ENCODE measurements at regions of chr2 and their contacts with region 1.

Region 1: DNA sequence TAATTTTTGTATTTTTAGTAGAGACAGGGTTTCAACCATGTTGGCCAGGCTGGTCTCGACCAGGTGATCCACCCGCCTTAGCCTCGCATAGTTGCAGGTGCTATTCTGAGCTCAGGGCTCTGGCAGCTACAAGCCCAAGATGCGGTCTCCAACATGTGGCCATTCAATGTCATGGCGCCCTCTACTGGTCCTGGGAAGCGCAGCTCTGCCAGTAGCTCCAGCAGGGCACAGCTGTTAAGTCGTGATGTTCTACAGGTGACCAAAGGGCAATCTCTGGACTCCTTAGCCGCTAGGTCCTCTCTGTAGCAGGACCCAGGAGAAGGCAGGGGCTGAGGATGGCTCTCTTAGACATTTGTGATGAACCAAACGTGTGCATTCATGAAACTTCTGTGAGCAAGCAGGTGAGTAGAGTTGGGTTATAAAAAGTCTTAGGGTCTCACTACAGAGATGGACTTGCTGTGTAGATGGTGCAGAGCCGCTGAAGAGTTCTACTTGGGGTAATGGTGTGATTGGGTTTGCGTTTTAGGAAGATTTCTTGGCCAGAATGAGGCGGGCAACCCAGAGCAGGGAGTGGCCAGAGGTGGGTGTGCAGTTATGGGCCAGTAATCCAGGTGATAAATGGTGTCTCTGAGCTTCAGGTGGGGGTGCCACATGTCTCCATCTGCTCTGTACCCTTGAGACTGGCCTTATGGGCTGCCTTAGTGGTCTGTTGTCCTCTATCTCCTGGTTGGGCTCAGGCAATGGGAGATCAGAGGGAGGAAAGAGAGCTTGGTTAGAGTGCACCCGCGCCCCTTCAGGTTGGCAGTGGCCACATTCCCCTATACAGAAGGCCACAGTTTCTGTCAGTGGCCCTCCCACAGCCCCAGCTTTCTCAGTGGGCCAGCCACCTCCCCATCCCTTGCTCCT is 31.0 kb downstream of the IL37 start:
- DNase-seq: peak; percentile 84
- H3K4me3 Mint-ChIP-seq: no peak overlapping the region
- H3K27ac Mint-ChIP-seq: no peak overlapping the region
- H3K4me1 Mint-ChIP-seq: peaks cover 7% of the 10 kb centered on the region
- H3K27me3 Mint-ChIP-seq: peaks cover 10% of the 10 kb centered on the region

Region 2: DNA sequence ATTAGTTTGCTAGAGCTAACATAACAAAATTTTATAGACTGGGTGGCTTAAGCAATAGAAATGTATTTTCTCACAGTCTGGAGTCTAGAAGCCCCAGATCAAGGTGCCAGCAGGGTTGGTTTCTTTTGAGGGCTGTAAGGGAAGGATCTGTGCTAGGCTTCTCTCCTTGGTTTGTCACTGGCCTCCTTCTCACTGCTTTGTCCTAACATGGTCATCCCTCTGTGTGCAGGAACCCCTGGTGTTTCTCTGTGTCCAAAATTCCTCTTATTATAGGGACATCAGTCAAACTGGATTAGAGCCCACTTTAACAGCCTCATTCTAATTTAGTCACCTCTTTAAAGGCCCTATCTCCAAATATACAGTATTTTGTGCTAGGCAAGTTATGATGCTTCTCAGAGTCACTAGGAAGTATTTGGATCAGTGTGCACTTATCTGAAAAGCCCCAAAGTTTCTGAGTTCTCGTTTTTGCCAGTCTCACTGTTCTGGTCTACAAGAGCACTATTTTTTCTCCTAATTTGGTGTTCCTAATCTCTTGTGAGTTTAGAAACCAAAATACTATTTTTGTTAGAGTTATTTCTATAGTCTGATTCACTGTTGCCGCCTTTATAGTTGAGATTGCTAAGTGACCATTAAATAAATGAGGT is 637.6 kb before region 1 on chr2:
- CTCF ChIA-PET with region 1: no interaction called
- POLR2A ChIA-PET with region 1: no interaction called
- DNase-seq: no peak
- H3K4me3 Mint-ChIP-seq: no peak overlapping the region
- H3K27ac Mint-ChIP-seq: no peak overlapping the region
- H3K4me1 Mint-ChIP-seq: peaks cover 3% of the 10 kb centered on the region
- H3K27me3 Mint-ChIP-seq: no peaks in the 10 kb centered on the region

Region 3: DNA sequence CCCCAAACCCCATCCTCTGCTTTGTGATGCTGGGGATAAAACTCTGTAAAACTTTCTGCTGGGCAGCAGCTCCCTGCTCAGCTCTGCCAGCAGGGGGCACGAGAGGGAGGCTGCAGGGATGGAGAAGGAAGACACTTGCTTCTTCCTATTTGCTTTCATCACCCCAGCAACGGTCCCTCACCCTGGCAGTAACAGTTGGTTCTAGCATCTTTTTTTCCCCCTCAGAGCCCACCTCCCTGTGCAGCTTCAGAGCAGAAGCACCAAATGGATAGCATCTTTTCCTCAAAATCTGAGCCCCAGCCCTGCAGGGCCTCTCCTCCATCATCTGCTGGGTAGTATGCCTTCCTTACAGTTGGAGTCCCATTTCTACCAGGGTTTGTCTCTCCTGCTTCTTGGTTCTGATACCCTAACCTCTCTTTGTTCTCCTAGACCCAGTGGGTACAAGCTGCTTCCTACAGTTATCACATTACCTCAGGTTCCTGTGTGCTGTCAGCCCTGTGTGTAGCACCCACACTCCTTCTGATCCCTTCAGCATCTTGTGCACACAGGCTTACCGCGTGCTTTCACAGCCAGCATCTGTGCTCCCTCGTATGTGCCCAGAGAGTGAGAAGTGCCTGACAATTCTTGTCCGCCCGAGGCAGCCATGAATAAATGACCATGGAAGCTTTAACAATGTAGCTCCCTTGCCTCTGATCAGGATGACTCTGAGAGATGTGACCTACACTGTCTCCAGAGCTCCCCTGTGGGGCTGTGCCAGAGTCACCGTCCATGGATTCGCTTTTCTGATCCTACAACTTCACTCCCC is 192.0 kb before region 1 on chr2:
- CTCF ChIA-PET with region 1: interaction called, 188 read pairs
- POLR2A ChIA-PET with region 1: interaction called, 24 read pairs
- DNase-seq: peak; percentile 86
- H3K4me3 Mint-ChIP-seq: no peak overlapping the region
- H3K27ac Mint-ChIP-seq: peak overlapping the region; percentile 74
- H3K4me1 Mint-ChIP-seq: peaks cover 57% of the 10 kb centered on the region
- H3K27me3 Mint-ChIP-seq: no peaks in the 10 kb centered on the region

Region 4: GRCh38 chr2:112884869-112885505 is 57.0 kb before region 1 on chr2:
- CTCF ChIA-PET with region 1: interaction called, 44 read pairs
- POLR2A ChIA-PET with region 1: interaction called, 3 read pairs
- DNase-seq: peak; percentile 82
- H3K4me3 Mint-ChIP-seq: no peak overlapping the region
- H3K27ac Mint-ChIP-seq: peak overlapping the region; percentile 60
- H3K4me1 Mint-ChIP-seq: peaks cover 46% of the 10 kb centered on the region
- H3K27me3 Mint-ChIP-seq: no peaks in the 10 kb centered on the region

Region 5: DNA sequence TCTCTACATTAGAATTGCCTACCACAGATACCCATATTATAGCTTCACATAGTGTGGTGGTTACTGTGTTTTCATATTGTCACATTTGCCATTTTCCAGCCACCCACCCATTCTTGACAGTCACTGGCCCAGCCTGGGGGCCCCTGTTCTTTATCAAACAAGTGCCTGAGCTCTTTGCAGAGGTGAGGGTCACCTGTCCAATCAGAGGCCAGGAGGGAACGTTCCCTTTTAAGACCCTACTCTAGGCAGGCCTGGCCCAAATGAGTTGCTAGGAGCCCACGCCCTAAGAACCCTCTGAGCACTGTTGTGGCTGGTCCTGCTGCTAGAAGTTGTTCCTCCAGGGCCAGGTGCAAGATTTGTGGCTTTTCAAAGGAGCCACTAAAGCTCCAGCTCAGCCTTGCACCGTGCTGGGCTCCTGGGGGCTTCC is 25.8 kb before region 1 on chr2:
- CTCF ChIA-PET with region 1: interaction called, 20 read pairs
- POLR2A ChIA-PET with region 1: no interaction called
- DNase-seq: no peak
- H3K4me3 Mint-ChIP-seq: no peak overlapping the region
- H3K27ac Mint-ChIP-seq: peak overlapping the region; percentile 53
- H3K4me1 Mint-ChIP-seq: peaks cover 34% of the 10 kb centered on the region
- H3K27me3 Mint-ChIP-seq: no peaks in the 10 kb centered on the region

Region 6: GRCh38 chr2:112958428-112959108 is 16.6 kb after region 1 on chr2:
- CTCF ChIA-PET with region 1: interaction called, 14 read pairs
- POLR2A ChIA-PET with region 1: no interaction called
- DNase-seq: peak; percentile 46
- H3K4me3 Mint-ChIP-seq: no peak overlapping the region
- H3K27ac Mint-ChIP-seq: no peak overlapping the region
- H3K4me1 Mint-ChIP-seq: no peaks in the 10 kb centered on the region
- H3K27me3 Mint-ChIP-seq: peaks cover 4% of the 10 kb centered on the region